ENCODE measurements at regions of chr14 and their contacts with region 1.

Region 1: DNA sequence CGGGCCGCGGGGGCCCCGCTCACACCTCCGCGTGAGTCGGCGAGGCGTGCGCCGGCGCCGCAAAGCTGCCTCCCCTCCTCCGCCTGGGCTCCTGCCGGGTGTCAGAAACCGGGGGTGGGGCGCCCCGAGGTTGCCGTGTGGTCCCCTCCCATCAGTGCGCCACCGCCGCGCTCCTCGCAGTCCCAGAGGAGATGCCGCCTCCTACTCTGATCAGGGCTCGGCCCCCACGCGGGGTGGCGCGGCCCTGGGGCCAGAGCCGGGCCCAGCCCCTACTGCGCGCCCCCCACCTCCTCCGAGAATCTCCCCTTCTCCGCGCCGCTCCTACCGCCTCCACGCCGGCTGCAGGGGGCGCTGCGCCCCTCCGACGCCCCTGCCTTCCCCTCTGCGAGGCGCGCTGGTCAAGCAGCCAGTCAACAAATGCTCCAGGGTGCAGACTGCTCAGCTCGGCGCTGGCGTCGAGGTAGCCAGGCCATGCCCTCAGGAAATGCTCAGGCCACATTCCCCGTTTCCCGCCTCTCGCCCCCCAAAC is 467 bp upstream of the JAG2 start:
- DNase-seq: peak; percentile 62
- ATAC-seq: peak; percentile 57
- H3K4me3 Mint-ChIP-seq: peak overlapping the region; percentile 46
- H3K27ac Mint-ChIP-seq: no peak overlapping the region
- H3K4me1 Mint-ChIP-seq: peaks cover 2% of the 10 kb centered on the region
- H3K27me3 Mint-ChIP-seq: peaks cover 19% of the 10 kb centered on the region
- CTCF ChIP-seq: peak; percentile 86

Region 2: DNA sequence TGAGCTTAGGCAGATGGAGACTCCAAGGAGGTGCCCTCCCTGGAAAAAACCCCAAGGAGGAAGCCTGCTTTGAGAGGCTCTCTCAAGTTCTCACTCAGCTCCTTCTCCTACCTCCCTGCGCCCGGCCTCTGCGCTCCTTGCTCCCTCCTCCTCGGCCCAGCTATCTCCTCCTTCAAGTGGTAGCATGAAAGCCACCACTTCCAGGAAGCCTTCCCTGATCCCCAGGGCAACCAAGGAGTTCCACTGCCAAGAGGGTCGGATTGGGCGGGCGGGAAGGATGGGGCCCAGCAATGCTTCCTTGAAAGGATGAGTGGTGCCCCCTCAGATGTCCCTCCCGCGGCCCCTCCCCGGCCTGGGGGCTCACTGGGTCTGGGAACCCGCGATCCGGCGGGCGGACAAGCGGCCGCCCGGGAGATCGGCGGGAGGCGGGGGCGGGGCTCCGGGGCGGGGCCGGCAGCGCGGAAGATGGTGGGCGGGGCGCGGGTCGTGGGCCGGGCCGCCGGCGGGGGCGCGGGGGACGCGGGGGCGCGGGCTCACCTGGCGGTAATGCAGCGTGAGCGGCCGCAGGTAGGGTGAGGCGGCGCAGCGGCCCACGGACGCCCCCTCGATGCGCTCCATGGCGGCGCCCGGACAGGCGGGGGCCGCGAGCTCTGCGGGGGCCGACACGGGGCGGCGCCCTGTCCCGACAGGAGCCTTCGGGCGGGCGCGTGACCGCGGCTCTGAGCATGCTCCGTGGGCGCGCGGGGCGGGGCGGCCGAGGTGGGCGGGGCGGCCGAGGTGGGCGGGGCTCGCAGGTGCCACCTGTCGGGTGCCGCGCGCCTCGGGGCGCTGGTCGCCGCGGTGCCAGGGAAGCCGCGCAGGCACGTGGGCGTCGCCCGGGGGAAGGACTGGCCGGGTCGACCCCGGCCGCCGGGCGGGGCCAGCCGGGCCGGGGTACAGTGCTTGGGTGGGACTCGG is 11.8 kb after region 1 on chr14 and contains the start of gene NUDT14:
- CTCF ChIA-PET with region 1: interaction called, 17 read pairs
- POLR2A ChIA-PET with region 1: interaction called, 5 read pairs
- intact Hi-C with region 1: no loop called
- DNase-seq: peak; percentile 86
- ATAC-seq: peak; percentile 89
- H3K4me3 Mint-ChIP-seq: peak within 1 kb of the TSS; percentile 70
- H3K27ac Mint-ChIP-seq: no peak within 1 kb of the TSS
- H3K4me1 Mint-ChIP-seq: peaks cover 7% of the 10 kb centered on the region
- H3K27me3 Mint-ChIP-seq: no peaks in the 10 kb centered on the region
- CTCF ChIP-seq: no peak
- total RNA-seq, gene NUDT14: 9.3 to 9.7 TPM